ENCODE measurements at regions of chr2 and their contacts with region 1.

Region 1: GRCh38 chr2:197378494-197379307 is 56.1 kb downstream of the SF3B1 start:
- DNase-seq: peak; percentile 25
- H3K4me3 ChIP-seq: peak overlapping the region in 1 of 3 experiments; percentile 23
- H3K27ac ChIP-seq: no peak overlapping the region
- H3K4me1 ChIP-seq: peaks cover 3% of the 10 kb centered on the region
- H3K27me3 ChIP-seq: no peaks in the 10 kb centered on the region
- CTCF ChIP-seq: peak; percentile 75 to 79

Region 2: GRCh38 chr2:196849895-196850294 is 528.8 kb before region 1 on chr2:
- CTCF ChIA-PET with region 1: no interaction called
- dilution Hi-C with region 1: no loop called
- in situ Hi-C with region 1: no loop called
- intact Hi-C with region 1: loop called (anchors 1 kb)
- DNase-seq: peak; percentile 26
- H3K4me3 ChIP-seq: no peak overlapping the region
- H3K27ac ChIP-seq: no peak overlapping the region
- H3K4me1 ChIP-seq: no peaks in the 10 kb centered on the region
- H3K27me3 ChIP-seq: no peaks in the 10 kb centered on the region
- CTCF ChIP-seq: peak; percentile 9 to 38

Region 3: GRCh38 chr2:197113275-197113711 is 265.4 kb before region 1 on chr2:
- CTCF ChIA-PET with region 1: interaction called, 4 read pairs
- dilution Hi-C with region 1: no loop called
- in situ Hi-C with region 1: loop called in 1 of 2 experiments (anchors 10 kb)
- intact Hi-C with region 1: loop called (anchors 1 kb)
- DNase-seq: peak; percentile 6
- H3K4me3 ChIP-seq: no peak overlapping the region
- H3K27ac ChIP-seq: no peak overlapping the region
- H3K4me1 ChIP-seq: no peaks in the 10 kb centered on the region
- H3K27me3 ChIP-seq: no peaks in the 10 kb centered on the region
- CTCF ChIP-seq: peak; percentile 47 to 53

Region 4: DNA sequence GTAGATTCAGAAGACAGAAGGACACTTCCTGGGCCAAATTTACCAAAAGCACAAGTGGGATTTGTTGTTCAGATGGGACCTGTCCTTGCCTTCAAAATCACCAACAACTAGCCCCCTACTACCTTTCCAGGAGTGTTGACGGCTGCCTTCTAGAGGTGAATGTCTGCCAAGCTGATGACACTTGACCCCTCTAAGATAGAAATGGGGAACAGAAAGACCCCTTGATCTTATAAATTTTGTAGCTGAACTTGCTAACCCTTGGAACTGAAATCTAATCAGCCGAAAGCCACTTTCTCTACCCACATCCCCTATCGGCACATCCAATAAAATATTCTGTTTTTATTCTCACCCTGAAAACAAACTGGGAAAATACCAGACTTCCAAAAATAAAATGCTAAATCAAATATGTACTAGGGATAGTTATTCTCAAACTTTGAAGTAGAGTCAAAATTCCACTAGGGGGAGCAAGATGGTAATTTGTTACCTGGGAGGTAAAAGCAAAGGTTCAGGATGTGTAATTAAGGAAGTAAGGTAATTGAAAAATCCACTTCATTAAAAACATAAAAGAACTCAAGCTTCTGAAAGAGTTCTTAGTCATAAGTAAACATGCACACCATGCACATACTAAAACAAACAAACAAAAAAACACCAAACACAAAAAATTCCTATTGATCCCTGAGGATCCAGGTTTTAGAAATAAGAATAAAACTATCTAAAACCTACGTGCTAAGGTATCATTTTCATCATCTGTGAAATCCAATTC is 187.3 kb before region 1 on chr2:
- CTCF ChIA-PET with region 1: no interaction called
- dilution Hi-C with region 1: no loop called
- in situ Hi-C with region 1: loop called (anchors 10 to 25 kb)
- intact Hi-C with region 1: loop called (anchors 1 kb)
- DNase-seq: peak; percentile 32
- H3K4me3 ChIP-seq: no peak overlapping the region
- H3K27ac ChIP-seq: no peak overlapping the region
- H3K4me1 ChIP-seq: no peaks in the 10 kb centered on the region
- H3K27me3 ChIP-seq: no peaks in the 10 kb centered on the region
- CTCF ChIP-seq: peak; percentile 62 to 67